ENCODE measurements at regions of chr20 and their contacts with region 1.

Region 1: DNA sequence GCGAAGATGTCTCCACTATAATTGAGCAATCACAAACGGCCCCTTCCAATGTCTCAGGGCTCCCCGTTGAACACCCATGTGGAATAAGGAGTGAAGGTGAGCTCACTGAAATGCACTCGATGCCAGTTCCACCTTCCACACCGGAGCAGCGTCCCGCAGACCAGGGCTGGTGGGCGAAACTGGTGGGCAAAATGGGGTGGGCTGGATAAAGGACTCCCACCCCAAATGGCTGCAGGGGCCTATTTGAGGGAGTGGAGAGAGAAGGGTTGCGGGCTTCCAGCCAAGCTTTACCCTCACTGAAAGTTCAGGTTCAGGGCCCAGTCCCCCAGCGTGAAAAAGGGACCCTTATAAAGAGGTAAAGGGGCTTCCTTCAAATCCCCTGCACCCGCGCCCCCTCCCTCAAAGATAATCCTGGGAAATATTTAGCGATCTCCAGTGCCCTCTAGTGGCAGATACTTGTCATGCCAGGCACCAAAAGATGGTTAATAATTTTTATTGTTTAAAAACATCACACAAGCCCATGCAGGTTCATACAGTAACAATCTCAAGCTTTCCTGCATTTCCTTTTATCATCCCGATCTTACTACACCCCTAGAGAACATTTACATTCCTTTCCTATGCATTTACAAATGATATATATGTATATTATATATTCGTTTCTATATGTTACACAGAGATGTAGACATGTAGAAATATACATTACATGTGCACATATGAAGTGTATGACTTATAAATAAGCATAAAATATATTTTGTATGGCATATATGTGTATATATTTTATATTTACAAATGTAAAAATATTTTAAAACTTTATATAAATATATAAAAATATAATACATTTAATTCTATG is 58.2 kb upstream of the NKX2-2 start:
- DNase-seq: peak; percentile 34
- CTCF ChIP-seq: peak; percentile 85

Region 2: DNA sequence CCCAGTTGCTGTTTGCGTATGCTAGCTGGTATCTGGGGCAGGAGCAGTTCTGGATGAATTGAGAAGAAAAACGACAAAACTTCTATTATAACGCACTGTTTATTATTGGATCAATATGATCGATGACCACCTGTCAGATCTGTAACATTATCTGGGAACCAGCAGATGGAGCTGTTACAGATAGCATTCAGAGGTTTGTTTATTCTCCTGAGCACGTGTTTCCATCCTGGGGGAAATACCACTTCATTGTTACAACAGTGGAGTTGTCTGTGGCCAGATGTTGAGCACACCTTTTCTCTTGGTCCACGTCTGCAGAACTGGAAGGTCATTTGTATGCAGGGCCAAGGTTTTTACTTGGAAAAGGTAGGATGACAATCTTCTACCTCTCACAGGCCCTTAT is 42.2 kb before region 1 on chr20:
- CTCF ChIA-PET with region 1: interaction called, 17 read pairs
- POLR2A ChIA-PET with region 1: no interaction called
- DNase-seq: peak; percentile 36
- CTCF ChIP-seq: no peak

Region 3: DNA sequence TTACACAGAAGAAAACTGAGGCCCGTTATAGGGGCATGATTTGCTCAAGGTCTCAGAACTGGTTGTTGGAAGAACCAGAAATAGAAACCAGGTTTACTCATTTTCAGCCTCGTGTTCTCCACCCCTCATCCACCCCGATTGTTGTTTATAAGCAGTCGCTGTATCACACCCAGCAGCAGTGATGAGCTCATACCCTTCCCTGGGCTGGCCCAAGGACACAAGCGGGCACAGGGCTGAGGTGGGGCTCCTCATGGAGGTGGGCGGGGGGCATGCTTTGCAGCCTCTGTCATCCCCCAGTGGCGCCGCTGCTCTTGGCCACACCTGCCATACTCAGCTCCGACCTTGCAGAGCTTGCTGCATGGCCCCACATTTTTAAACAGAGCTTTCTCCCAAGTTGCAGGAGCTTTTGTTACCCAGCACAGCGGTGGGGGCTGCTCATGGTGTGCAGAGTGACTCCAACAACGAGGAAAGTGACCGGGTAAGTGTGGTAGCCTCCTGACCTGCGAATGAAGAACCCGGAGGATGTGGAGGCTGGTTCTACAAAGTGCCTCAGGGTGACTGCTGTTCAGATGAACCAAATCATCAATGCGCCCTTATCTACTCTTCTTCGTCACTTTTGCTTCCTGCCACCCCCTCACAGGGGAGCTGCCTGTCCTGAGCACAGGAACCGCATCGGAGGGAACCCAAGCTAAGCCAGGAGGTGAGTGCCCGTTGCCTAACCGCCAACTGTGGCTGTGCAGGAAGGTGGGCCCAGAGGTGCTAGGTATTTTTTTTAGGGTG is 14.6 kb before region 1 on chr20:
- CTCF ChIA-PET with region 1: interaction called, 24 read pairs
- POLR2A ChIA-PET with region 1: no interaction called
- DNase-seq: no peak
- CTCF ChIP-seq: no peak

Region 4: GRCh38 chr20:21583486-21584168 is 11.6 kb after region 1 on chr20:
- CTCF ChIA-PET with region 1: interaction called, 18 read pairs
- POLR2A ChIA-PET with region 1: no interaction called
- DNase-seq: no peak
- CTCF ChIP-seq: no peak

Region 5: DNA sequence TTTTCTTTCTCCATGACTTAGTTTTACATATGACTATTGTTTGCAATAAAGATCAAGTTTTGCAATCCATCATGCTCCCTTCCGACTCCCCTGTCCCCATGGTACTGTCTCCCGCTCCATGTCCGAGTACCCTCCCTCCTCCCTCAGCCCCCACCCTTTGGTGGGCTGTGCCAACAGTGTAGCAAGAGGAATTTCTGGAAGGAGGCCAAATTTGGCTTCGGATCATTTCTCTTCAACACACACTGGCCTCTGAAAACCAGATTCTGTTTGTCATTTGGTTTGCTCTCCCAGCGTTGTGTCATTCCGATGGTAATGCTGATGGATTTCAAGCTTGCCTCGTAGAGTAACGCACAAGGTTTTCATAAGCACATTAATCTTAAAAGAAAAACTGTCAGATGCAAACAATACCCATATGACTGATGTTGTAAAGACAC is 110.5 kb after region 1 on chr20:
- CTCF ChIA-PET with region 1: no interaction called
- POLR2A ChIA-PET with region 1: no interaction called
- DNase-seq: no peak
- CTCF ChIP-seq: no peak

Measured in GM10248 (cell line).